ENCODE measurements at regions of chr16 and their contacts with region 1.

Region 1: GRCh38 chr16:50741808-50742575 is at the start of gene CYLD:
- DNase-seq: peak; percentile 99 to 100
- H3K4me3 ChIP-seq: peak within 1 kb of the TSS; percentile 69 to 93
- H3K27ac ChIP-seq: peak within 1 kb of the TSS; percentile 86
- H3K4me1 ChIP-seq: peaks cover 0 to 12% of the 10 kb centered on the region in 2 donors
- H3K27me3 ChIP-seq: no peaks in the 10 kb centered on the region
- CTCF ChIP-seq: no peak
- total RNA-seq, gene CYLD: 33.2 TPM

Region 2: DNA sequence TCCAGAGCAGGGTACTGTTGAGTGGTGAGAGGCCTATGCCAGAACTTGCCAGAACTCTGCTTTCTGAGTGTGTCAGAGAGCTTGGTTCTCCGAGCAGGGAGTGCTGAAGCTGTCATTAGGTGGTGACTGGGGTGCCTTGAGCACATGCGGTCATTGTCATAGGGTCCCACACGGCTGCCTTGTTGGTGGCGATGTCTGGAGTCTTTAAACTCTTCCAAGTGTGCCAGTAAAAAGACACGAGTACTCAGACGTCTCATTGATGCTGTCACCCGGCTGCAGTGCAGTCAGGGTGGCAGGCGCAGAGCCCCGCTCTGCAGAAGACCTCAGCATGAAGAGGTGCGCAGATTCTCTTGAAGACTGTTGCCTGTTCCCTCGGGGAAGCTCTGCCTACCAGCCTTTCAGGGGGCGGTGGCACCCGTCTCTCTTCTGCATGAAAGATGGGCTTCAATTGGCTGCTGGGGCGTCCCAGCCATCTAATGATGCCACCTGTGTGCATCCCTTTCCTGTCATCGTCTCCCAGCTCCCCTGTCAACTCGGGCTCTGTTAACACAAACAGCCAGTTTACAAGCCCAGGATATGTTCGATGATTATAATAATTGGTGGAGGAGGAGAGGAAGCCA is 135.5 kb before region 1 on chr16:
- intact Hi-C with region 1: loop called (anchors 2 kb)
- DNase-seq: no peak
- H3K4me3 ChIP-seq: no peak overlapping the region
- H3K27ac ChIP-seq: peak overlapping the region; percentile 45 to 93
- H3K4me1 ChIP-seq: peaks cover 24 to 42% of the 10 kb centered on the region in 2 donors
- H3K27me3 ChIP-seq: no peaks in the 10 kb centered on the region
- CTCF ChIP-seq: no peak

Region 3: DNA sequence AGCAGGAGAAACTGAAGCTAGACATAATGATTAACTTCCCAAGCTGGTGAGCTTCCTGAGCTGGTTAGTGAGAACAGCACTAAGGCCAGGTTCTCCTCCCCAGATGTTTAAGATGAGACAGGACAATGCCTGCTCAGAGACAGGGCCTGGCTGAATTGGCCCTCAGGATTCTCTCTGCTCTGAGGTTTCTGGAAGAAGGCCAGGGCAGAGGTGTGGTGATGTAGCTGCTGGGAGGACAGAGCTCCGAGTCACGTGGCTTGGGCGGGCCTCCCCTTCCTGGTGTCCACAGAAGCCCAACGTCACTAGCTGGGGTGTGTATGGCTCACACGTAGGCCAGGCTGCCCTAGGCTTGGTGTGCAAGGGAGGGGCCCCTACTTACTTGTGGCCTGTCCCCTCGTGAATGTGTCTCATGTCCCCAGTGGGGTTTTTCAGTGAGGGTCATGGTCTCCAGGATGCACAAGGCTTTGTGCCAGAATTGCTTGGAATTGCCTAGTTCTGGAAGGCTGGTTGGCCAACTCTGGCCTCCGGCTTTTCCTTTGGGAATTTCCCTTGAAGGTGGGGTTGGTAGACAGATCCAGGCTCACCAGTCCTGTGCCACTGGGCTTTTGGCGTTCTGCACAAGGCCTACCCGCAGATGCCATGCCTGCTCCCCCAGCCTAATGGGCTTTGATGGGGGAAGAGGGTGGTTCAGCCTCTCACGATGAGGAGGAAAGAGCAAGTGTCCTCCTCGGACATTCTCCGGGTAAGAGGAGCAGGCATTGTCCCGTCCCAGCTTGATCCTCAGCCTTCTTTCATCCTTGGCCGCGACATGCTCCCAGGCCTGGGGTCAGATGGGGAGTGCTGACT is 45.2 kb before region 1 on chr16:
- intact Hi-C with region 1: loop called (anchors 2 kb)
- DNase-seq: peak; percentile 80 to 85
- H3K4me3 ChIP-seq: peak overlapping the region in 1 of 2 donors; percentile 62
- H3K27ac ChIP-seq: peak overlapping the region; percentile 16 to 50
- H3K4me1 ChIP-seq: peaks cover 3 to 20% of the 10 kb centered on the region in 2 donors
- H3K27me3 ChIP-seq: no peaks in the 10 kb centered on the region
- CTCF ChIP-seq: no peak

Region 4: GRCh38 chr16:50724306-50724705 is 17.7 kb before region 1 on chr16:
- intact Hi-C with region 1: no loop called
- DNase-seq: no peak
- H3K4me3 ChIP-seq: no peak overlapping the region
- H3K27ac ChIP-seq: no peak overlapping the region
- H3K4me1 ChIP-seq: no peaks in the 10 kb centered on the region
- H3K27me3 ChIP-seq: no peaks in the 10 kb centered on the region
- CTCF ChIP-seq: no peak

Region 5: GRCh38 chr16:51175081-51175480 is 433.1 kb after region 1 on chr16:
- intact Hi-C with region 1: no loop called
- DNase-seq: no peak
- H3K4me3 ChIP-seq: no peak overlapping the region
- H3K27ac ChIP-seq: no peak overlapping the region
- H3K4me1 ChIP-seq: no peaks in the 10 kb centered on the region
- H3K27me3 ChIP-seq: no peaks in the 10 kb centered on the region
- CTCF ChIP-seq: no peak

Measured in ascending aorta (tissue), 2 donors.